Activated T-helper 1 cell treated with anti-CD3 and anti-CD28 coated beads, Interleukin-12 subunit alpha, Interleukin-12 subunit beta, Interleukin-2, Interleukin-4 antibody, amounts not matched to agents 30 ng/mL and 10 ng/mL and 1 ng/mL, durations not matched to agents 14 hours and 24 hours and 36 hours (primary cell): ENCODE measurements at regions of chr5 and their contacts with region 1.

Region 1: DNA sequence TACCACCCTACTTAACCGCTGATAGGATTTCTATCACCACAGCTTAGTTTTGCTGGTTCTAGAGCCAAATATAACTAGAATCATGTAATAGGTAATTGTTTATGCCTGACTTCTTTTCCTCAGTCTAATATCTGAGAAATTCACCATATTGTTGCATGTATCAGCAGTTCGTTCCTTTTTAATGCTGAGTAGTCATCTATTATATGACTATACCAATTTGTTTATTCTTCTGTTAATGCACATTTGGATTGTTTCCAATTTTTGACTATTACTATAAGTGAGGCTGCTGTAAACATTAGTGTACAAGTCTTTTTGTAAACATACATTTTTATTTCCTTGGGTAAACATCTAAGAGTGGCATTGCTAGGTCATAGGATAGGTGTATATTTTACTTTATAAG is 25.9 kb downstream of the CSNK1G3 start:
- DNase-seq: no peak
- H3K4me3 Mint-ChIP-seq: no peak overlapping the region
- H3K27ac Mint-ChIP-seq: no peak overlapping the region
- H3K4me1 Mint-ChIP-seq: peaks cover 14% of the 10 kb centered on the region
- H3K27me3 Mint-ChIP-seq: no peaks in the 10 kb centered on the region

Region 2: DNA sequence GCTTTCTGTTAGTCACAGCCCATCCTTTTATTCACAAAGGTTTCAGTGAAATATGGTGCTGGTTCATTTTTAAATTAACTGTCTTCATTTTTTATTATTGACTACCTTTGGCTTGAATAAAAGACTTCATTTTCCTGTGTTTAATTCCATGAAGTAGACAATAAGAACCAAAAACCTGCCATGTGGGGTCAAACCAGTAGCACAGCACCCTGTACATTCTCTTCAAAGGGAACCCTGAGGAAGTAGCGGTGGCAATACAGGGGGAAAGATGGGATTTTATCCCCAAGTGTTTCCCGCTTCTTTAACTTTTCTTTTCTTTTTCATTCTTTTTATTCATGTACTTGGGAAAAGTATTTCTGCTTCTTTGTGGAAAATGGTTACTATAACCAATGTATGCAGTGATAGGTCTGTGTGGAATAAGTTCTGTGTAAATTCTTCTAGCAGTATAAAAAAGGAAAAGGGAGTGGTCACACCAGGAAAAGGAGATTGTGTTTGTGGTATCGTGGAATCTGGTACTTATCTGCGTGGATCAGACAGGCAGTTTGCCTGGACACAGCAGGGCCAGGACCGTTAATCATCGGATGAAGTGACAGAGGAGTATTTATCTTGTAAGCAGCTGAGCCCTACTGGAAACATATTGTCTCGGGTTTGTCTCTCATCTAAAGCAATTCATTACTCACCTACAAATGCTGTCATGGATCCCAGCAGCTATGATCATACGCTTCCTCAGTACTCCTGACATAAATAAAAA is 595.5 kb before region 1 on chr5:
- intact Hi-C with region 1: no loop called
- DNase-seq: no peak
- H3K4me3 Mint-ChIP-seq: no peak overlapping the region
- H3K27ac Mint-ChIP-seq: no peak overlapping the region
- H3K4me1 Mint-ChIP-seq: no peaks in the 10 kb centered on the region
- H3K27me3 Mint-ChIP-seq: no peaks in the 10 kb centered on the region

Region 3: GRCh38 chr5:123107343-123108244 is 430.3 kb before region 1 on chr5:
- intact Hi-C with region 1: no loop called
- DNase-seq: no peak
- H3K4me3 Mint-ChIP-seq: no peak overlapping the region
- H3K27ac Mint-ChIP-seq: no peak overlapping the region
- H3K4me1 Mint-ChIP-seq: no peaks in the 10 kb centered on the region
- H3K27me3 Mint-ChIP-seq: peaks cover 8% of the 10 kb centered on the region

Region 4: GRCh38 chr5:123520677-123521247 is 17.1 kb before region 1 on chr5:
- intact Hi-C with region 1: loop called (anchors 2 kb)
- DNase-seq: no peak
- H3K4me3 Mint-ChIP-seq: no peak overlapping the region
- H3K27ac Mint-ChIP-seq: no peak overlapping the region
- H3K4me1 Mint-ChIP-seq: peaks cover 45% of the 10 kb centered on the region
- H3K27me3 Mint-ChIP-seq: no peaks in the 10 kb centered on the region

Region 5: DNA sequence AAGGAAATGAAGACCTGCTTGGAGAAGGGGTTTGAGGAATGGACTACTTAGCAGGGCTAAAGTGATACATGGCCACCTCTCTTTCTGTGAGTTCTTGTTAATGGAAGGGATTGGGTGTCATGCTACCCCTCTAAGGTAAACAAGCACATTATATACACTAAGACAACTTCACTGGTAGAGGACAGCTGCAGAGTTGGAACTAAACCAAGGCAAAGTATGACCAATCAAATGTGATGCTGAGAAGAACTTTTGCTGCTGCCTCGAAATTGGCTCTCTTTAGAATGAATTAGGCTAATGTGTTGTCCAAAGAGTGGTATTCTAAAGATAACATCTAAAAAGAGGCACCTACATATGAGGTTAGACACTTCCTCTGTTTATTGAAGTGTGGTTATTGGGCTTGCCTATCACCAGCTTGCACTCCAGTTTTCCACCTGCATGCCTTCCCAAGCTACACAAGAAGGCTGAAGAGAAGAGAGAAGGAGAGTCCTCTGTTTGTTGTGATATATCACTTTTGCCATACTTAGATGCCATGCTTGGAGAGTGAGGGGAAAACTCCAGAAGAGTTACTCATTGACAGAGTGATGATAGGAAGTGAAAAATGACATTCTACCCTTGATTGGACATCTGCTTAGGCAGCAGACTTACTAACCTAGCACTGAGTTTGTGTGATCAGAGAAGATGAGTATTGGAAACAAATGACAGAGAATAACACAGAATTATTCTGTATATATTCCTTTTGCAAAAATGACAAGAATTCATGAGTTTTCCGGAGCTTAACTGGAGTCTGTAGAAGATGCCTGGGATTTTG is 672.5 kb after region 1 on chr5:
- intact Hi-C with region 1: no loop called
- DNase-seq: no peak
- H3K4me3 Mint-ChIP-seq: no peak overlapping the region
- H3K27ac Mint-ChIP-seq: no peak overlapping the region
- H3K4me1 Mint-ChIP-seq: no peaks in the 10 kb centered on the region
- H3K27me3 Mint-ChIP-seq: no peaks in the 10 kb centered on the region